Activated CD8-positive, alpha-beta T cell treated with anti-CD3 and anti-CD28 coated beads for 36 hours (primary cell): ENCODE measurements at regions of chr12 and their contacts with region 1.

Region 1: GRCh38 chr12:49358483-49359141 is 8.7 kb upstream of the SPATS2 start:
- DNase-seq: peak; percentile 80
- ATAC-seq: peak; percentile 98
- H3K4me3 Mint-ChIP-seq: no peak overlapping the region
- H3K27ac Mint-ChIP-seq: no peak overlapping the region
- H3K4me1 Mint-ChIP-seq: peaks cover 2% of the 10 kb centered on the region
- H3K27me3 Mint-ChIP-seq: peaks cover 12% of the 10 kb centered on the region
- CTCF ChIP-seq: peak; percentile 90

Region 2: DNA sequence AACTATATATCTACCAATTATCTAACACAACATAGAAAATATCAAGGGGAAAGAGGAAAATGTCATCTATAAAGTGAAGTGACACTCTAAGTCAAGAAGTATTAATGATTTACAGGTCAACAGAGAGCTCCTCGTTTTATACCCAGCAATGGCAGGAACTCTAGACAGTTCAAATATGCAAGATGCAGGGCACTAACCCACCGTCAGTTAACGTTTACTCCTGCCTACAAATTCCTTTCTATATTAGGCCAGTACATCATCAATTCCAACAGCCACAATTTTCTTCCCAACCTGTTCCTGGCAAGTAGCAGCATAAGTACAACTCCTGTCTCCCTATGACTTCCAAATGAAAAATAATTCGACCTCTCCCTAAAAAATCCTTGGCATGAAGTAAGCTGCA is 667.6 kb before region 1 on chr12:
- CTCF ChIA-PET with region 1: no interaction called
- POLR2A ChIA-PET with region 1: no interaction called
- intact Hi-C with region 1: no loop called
- DNase-seq: no peak
- ATAC-seq: no peak
- H3K4me3 Mint-ChIP-seq: no peak overlapping the region
- H3K27ac Mint-ChIP-seq: peak overlapping the region; percentile 35
- H3K4me1 Mint-ChIP-seq: peaks cover 28% of the 10 kb centered on the region
- H3K27me3 Mint-ChIP-seq: no peaks in the 10 kb centered on the region
- CTCF ChIP-seq: no peak

Region 3: GRCh38 chr12:49288412-49288853 is 70.2 kb before region 1 on chr12:
- CTCF ChIA-PET with region 1: interaction called, 115 read pairs
- POLR2A ChIA-PET with region 1: no interaction called
- intact Hi-C with region 1: no loop called
- DNase-seq: peak; percentile 81
- ATAC-seq: peak; percentile 69
- H3K4me3 Mint-ChIP-seq: no peak overlapping the region
- H3K27ac Mint-ChIP-seq: no peak overlapping the region
- H3K4me1 Mint-ChIP-seq: no peaks in the 10 kb centered on the region
- H3K27me3 Mint-ChIP-seq: peaks cover 22% of the 10 kb centered on the region
- CTCF ChIP-seq: peak; percentile 95

Region 4: GRCh38 chr12:49336645-49337584 is 21.7 kb before region 1 on chr12 and contains the start of gene C1QL4:
- CTCF ChIA-PET with region 1: interaction called, 25 read pairs
- POLR2A ChIA-PET with region 1: no interaction called
- intact Hi-C with region 1: no loop called
- DNase-seq: peak; percentile 90
- ATAC-seq: peak; percentile 89
- H3K4me3 Mint-ChIP-seq: peak within 1 kb of the TSS; percentile 35
- H3K27ac Mint-ChIP-seq: no peak within 1 kb of the TSS
- H3K4me1 Mint-ChIP-seq: peaks cover 15% of the 10 kb centered on the region
- H3K27me3 Mint-ChIP-seq: peaks cover 71% of the 10 kb centered on the region
- CTCF ChIP-seq: peak; percentile 96
- total RNA-seq, gene C1QL4: not detected

Region 5: DNA sequence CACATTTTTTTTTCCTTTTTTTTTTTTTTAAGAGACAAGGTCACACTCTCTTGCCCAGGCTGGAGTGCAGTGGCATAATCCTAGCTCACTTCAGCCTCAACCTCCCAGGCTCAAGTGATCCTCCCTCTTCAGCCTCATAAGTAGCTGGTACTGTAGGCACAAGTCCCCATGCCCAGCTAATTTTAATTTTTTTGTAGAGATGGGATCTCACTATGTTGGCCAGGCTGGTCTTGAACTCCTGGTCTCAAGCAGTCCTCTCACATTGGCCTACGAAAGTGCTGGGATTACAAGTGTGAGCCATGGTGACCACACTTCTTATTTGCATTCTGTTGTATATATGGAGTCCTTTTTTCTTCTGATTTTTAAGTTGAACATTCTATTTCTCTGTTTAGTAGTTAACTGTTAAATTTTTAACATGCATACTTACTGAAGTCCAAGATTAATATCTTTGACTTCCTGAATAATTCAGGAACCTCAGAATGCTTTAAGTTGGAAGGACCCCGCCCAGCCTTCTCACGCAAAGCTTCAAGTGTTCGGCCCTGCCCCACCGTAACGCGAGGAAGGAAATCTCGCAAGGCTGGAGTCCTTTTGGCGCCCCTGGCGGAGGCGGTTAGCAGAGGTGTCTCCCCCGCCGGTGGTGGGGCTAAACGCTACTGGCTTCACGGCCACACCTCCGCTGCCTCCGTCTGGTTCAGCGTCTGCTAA is 30.2 kb after region 1 on chr12:
- CTCF ChIA-PET with region 1: interaction called, 10 read pairs
- POLR2A ChIA-PET with region 1: no interaction called
- intact Hi-C with region 1: no loop called
- DNase-seq: peak; percentile 81
- ATAC-seq: peak; percentile 98
- H3K4me3 Mint-ChIP-seq: no peak overlapping the region
- H3K27ac Mint-ChIP-seq: no peak overlapping the region
- H3K4me1 Mint-ChIP-seq: peaks cover 4% of the 10 kb centered on the region
- H3K27me3 Mint-ChIP-seq: no peaks in the 10 kb centered on the region
- CTCF ChIP-seq: peak; percentile 58

Region 6: GRCh38 chr12:49462083-49462744 is 103.6 kb after region 1 on chr12:
- CTCF ChIA-PET with region 1: interaction called, 16 read pairs
- POLR2A ChIA-PET with region 1: no interaction called
- intact Hi-C with region 1: no loop called
- DNase-seq: no peak
- ATAC-seq: no peak
- H3K4me3 Mint-ChIP-seq: no peak overlapping the region
- H3K27ac Mint-ChIP-seq: no peak overlapping the region
- H3K4me1 Mint-ChIP-seq: no peaks in the 10 kb centered on the region
- H3K27me3 Mint-ChIP-seq: no peaks in the 10 kb centered on the region
- CTCF ChIP-seq: no peak

Region 7: GRCh38 chr12:49503674-49504180 is 145.1 kb after region 1 on chr12:
- CTCF ChIA-PET with region 1: interaction called, 57 read pairs
- POLR2A ChIA-PET with region 1: no interaction called
- intact Hi-C with region 1: no loop called
- DNase-seq: no peak
- ATAC-seq: no peak
- H3K4me3 Mint-ChIP-seq: no peak overlapping the region
- H3K27ac Mint-ChIP-seq: no peak overlapping the region
- H3K4me1 Mint-ChIP-seq: peaks cover 12% of the 10 kb centered on the region
- H3K27me3 Mint-ChIP-seq: no peaks in the 10 kb centered on the region
- CTCF ChIP-seq: no peak

Region 8: DNA sequence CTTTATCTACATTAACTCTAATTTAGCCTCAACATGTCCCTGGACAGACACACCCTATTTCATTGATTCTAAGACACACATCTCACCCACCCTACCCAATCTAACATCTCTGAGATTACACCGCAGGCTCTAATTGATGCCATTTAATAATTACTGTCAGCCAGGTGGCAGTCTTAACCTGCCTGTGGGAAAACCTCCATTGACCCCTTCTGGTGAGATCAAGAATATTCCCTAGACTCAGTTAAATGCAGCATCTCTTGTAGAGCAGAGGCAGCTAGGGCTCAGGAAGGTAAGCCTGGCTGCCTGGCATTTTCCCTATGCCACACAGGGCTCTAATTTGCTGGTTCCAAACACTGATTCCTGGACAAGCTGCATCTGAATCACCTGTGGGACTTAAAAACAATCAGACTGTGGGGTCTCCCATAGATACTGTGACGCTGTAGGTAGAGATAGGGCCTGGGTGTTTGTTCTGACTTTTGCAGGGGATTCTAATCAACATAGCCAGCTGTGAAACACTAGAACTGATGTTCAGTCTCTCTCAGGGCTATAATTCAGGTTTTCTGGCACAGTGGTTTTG is 195.0 kb after region 1 on chr12:
- CTCF ChIA-PET with region 1: interaction called, 27 read pairs
- POLR2A ChIA-PET with region 1: no interaction called
- intact Hi-C with region 1: no loop called
- DNase-seq: peak; percentile 26
- ATAC-seq: peak; percentile 64
- H3K4me3 Mint-ChIP-seq: no peak overlapping the region
- H3K27ac Mint-ChIP-seq: no peak overlapping the region
- H3K4me1 Mint-ChIP-seq: peaks cover 3% of the 10 kb centered on the region
- H3K27me3 Mint-ChIP-seq: no peaks in the 10 kb centered on the region
- CTCF ChIP-seq: peak; percentile 73